Colonic mucosa (tissue), 4 donors: ENCODE measurements at regions of chr1 and their contacts with region 1.

Region 1: DNA sequence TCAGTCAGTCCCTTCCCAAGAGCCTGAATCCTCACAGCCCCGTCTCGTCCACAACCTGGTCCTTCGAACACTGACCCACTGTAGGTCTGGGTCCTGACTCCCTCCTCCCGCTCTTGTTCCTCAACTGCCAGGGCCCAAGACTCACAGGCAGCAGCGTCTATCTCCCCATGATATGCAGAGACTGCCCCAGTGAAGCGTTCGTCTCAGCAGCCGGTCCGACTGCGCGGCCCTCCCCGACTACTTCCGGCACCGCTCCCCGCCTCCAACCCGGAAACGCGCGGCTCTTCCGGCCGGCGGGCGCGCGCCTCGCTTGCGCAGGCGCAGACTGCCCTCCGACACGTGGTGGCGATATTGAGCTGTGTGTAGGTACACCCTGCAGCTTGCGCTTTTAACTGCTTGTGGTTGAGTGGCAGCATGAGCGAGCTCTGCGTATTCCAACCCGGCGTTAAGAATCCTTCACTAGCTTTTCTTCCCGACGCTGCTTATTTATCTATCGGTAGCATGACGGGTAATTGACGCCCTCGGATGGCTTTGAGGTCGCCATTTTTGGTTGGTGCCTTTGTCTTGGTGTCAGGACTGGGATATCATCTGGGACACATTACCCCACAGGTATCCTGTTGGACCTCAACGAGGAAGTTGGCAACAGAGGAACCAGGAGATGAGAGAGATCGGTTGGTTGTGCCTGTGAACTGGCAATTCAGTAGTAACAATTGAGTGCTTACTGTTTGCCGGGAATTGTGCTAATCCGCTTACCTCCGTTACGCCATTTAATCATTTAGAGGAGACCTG is at the start of gene TAF12:
- DNase-seq: peak; percentile 95
- H3K4me3 ChIP-seq: peak within 1 kb of the TSS; percentile 88
- H3K27ac ChIP-seq: peak within 1 kb of the TSS; percentile 88
- H3K4me1 ChIP-seq: peaks cover 18% of the 10 kb centered on the region
- H3K27me3 ChIP-seq: no peaks in the 10 kb centered on the region
- CTCF ChIP-seq: peak; percentile 12
- total RNA-seq, gene TAF12: 14.5 to 16.9 TPM

Region 2: DNA sequence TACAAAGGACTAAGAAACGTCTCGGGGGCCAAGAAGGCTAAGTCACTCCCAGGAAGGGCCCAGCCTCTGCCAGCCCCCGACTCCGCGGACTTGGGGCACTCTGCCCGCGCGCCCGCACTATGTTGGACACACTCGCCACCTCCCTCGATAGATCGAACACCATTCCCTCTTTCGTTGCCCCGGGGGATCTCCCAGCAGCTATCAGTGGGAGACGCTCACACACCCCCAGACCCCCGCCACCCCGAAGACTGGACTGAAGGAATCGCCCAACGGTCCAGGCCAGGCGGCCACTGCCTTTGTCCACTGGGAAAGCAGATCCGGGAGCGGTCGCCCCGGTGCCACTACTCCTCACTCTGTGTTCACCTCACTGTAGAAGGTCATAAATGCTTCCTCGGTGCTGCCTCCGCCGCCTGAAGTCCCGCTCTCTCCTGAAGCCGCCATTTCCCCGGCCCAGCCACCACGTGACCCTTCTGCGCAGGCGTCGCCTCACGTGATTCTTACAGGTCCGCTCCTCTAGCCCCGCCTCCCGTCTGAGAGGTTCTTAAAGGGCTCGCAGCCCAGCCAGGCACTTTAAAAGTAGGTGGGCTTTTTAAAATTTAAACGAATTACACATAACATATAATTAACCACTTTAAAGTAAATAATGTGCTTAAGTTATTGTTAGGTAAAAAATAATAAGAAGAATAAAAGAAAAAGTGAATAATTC is 410.3 kb before region 1 on chr1 and contains the start of gene DNAJC8:
- intact Hi-C with region 1: no loop called
- DNase-seq: peak; percentile 98
- H3K4me3 ChIP-seq: peak within 1 kb of the TSS; percentile 81
- H3K27ac ChIP-seq: peak within 1 kb of the TSS; percentile 48
- H3K4me1 ChIP-seq: peaks cover 14% of the 10 kb centered on the region
- H3K27me3 ChIP-seq: no peaks in the 10 kb centered on the region
- CTCF ChIP-seq: no peak
- total RNA-seq, gene DNAJC8: 53.1 to 57.2 TPM

Region 3: GRCh38 chr1:28470146-28470545 is 172.9 kb before region 1 on chr1:
- intact Hi-C with region 1: no loop called
- DNase-seq: no peak
- H3K4me3 ChIP-seq: no peak overlapping the region
- H3K27ac ChIP-seq: no peak overlapping the region
- H3K4me1 ChIP-seq: no peaks in the 10 kb centered on the region
- H3K27me3 ChIP-seq: no peaks in the 10 kb centered on the region
- CTCF ChIP-seq: no peak

Region 4: GRCh38 chr1:28482138-28482537 is 160.9 kb before region 1 on chr1:
- intact Hi-C with region 1: no loop called
- DNase-seq: no peak
- H3K4me3 ChIP-seq: no peak overlapping the region
- H3K27ac ChIP-seq: no peak overlapping the region
- H3K4me1 ChIP-seq: no peaks in the 10 kb centered on the region
- H3K27me3 ChIP-seq: no peaks in the 10 kb centered on the region
- CTCF ChIP-seq: no peak

Region 5: GRCh38 chr1:28736450-28737306 is 93.6 kb after region 1 on chr1 and contains the start of gene YTHDF2:
- intact Hi-C with region 1: loop called (anchors 5 kb)
- DNase-seq: peak; percentile 97
- H3K4me3 ChIP-seq: peak within 1 kb of the TSS; percentile 79
- H3K27ac ChIP-seq: peak within 1 kb of the TSS; percentile 95
- H3K4me1 ChIP-seq: peaks cover 9% of the 10 kb centered on the region
- H3K27me3 ChIP-seq: no peaks in the 10 kb centered on the region
- CTCF ChIP-seq: peak; percentile 89
- total RNA-seq, gene YTHDF2: 59.0 to 71.7 TPM